Sciatic nerve (tissue), 2 donors: ENCODE measurements at regions of chr16 and their contacts with region 1.

Region 1: DNA sequence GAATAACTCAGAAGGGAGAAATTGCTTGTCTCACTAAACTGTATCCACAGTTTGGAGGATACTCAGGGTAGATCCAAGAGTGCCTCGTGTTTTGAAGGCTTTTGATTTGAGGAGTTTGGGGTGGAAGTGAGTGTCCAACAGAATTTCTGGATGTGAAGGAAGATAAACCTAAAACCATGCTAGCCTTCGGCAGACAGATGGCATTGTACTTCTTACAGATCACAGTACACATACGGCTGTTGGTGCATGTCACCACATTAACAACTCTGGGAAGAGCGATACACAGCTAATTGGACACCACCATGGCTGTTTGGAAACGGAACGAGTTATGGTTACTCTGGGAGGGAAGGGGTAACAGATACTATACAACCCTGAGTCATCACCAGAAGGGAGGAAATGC is 420.4 kb downstream of the GRIN2A start:
- DNase-seq: no peak
- ATAC-seq: no peak

Region 2: GRCh38 chr16:9580025-9580424 is 181.8 kb before region 1 on chr16:
- intact Hi-C with region 1: loop called (anchors 5 kb)
- DNase-seq: no peak
- ATAC-seq: no peak